Tibial artery (tissue), 4 donors: ENCODE measurements at regions of chrX and their contacts with region 1.

Region 1: DNA sequence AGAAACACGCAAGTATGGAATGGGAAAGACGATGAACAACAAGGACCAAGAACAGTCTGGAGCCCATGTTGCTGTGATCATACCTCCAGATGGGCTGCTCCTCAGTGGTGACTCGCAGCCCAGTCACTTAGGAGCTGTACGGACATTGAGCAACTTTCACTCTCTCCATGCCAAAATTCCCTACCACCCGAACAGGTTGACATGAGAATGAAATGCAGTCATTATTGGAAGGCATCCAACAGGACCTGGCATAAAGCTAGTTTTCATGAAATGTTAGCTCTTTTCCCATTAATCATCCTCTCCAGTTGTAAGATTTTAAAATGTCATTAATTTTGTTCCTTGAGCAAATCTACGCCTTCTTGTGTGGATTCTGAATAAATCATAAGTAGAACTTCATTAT is 82.7 kb upstream of the GPM6B start:
- DNase-seq: peak in 1 of 2 donors; percentile 36
- H3K4me3 ChIP-seq: no peak overlapping the region
- H3K27ac ChIP-seq: peak overlapping the region in 1 of 2 donors; percentile 33
- H3K4me1 ChIP-seq: peaks cover 0 to 55% (median 11%) of the 10 kb centered on the region in 4 donors
- H3K27me3 ChIP-seq: no peaks in the 10 kb centered on the region
- CTCF ChIP-seq: no peak

Region 2: DNA sequence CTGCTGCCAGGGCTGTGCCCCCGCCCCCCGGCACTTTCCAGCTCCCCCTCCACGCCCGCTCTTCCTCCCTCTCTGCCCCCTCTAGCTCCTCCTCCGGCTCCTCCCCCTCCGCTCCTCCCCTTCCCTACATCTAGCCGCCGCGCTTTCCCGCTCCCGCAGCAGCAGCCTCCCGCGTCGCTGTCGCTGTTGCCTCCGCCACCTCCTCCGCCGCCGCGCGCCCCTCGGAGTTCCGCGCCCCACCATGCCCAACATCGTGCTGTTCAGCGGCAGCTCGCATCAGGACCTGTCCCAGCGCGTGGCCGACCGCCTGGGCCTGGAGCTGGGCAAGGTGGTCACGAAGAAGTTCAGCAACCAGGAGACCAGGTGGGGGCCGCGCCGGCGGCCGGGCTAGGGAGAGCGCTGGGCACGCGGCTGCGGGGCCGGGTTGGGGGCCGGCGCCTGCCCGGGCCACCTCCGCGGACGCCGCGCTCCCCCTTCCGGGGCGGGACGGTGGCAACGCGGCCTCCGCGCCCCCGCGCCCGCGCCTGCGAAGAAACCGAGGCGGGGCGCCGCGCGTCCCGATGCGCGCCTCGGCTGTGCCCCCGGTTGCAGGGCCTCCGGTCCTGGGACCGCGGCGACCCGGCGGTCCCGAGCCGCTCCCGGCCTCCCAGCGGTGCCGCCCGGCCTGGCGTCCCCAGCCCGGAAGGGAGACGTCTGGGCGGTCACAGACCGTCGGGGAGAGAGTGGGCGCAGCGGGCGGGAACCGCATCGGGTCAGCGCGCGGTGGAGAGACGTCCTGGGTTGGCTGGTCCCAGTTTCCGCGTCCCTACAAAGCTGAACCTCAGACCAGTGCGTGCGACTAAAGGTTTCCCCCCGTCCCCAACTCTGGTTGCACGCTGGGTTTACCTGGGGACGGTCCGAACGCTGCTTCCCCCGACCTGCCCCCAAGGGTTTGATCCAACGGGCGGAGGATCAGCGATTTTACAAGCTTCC is 1108.1 kb before region 1 on chrX and contains the start of gene PRPS2:
- intact Hi-C with region 1: loop called (anchors 10 kb)
- DNase-seq: peak; percentile 43 to 70
- H3K4me3 ChIP-seq: peak within 1 kb of the TSS; percentile 61 to 75
- H3K27ac ChIP-seq: peak within 1 kb of the TSS; percentile 9 to 41
- H3K4me1 ChIP-seq: peaks cover 0 to 2% (median 0%) of the 10 kb centered on the region in 4 donors
- H3K27me3 ChIP-seq: no peaks in the 10 kb centered on the region
- CTCF ChIP-seq: no peak

Region 3: GRCh38 chrX:13764765-13765164 is 134.8 kb before region 1 on chrX:
- intact Hi-C with region 1: no loop called
- DNase-seq: no peak
- H3K4me3 ChIP-seq: no peak overlapping the region
- H3K27ac ChIP-seq: no peak overlapping the region
- H3K4me1 ChIP-seq: peaks cover 0 to 6% (median 0%) of the 10 kb centered on the region in 4 donors
- H3K27me3 ChIP-seq: no peaks in the 10 kb centered on the region
- CTCF ChIP-seq: no peak